ENCODE measurements at regions of chr14 and their contacts with region 1.

Region 1: GRCh38 chr14:64303471-64303917 is 9.3 kb upstream of the ESR2 start:
- DNase-seq: peak; percentile 82
- ATAC-seq: peak; percentile 96
- H3K4me3 ChIP-seq: no peak overlapping the region
- H3K27ac ChIP-seq: no peak overlapping the region
- H3K4me1 ChIP-seq: no peaks in the 10 kb centered on the region
- H3K27me3 ChIP-seq: no peaks in the 10 kb centered on the region
- CTCF ChIP-seq: peak; percentile 97

Region 2: DNA sequence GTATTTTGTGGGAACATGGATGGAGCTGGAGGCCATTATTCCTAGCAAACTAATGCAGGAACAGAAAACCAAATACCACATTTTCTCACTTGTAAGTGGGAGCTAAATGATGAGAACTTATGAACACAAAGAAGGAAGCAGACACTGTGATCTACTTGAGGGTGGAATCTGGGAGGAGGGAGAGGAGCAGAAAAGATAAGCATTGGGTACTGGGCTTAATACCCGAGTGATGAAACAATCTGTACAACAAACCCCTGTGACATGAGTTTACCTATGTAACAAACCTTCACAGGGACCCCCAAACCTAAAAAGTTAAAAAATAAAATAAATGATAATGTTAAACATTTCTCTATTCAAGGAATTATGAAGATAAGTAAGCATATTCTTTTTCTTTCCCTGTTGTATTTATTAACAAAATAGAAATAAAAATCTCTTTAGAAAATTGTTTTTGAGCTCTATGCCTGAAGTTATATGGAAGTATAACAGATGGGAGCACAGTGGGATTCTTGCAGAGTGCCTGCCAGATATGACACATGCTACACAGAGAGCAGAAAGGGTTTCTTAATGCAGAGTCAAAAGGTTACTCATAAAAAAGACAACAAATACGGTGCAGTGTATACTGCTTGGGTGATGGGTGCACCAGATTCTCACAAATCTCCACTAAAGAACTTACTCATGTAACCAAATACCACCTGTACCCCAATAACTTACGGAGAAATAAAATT is 502.7 kb before region 1 on chr14:
- CTCF ChIA-PET with region 1: interaction called, 7 read pairs
- POLR2A ChIA-PET with region 1: no interaction called
- intact Hi-C with region 1: loop called (anchors 1 kb)
- DNase-seq: peak; percentile 19
- ATAC-seq: peak; percentile 33; the same call in 1 of the 2 replicates
- H3K4me3 ChIP-seq: no peak overlapping the region
- H3K27ac ChIP-seq: no peak overlapping the region
- H3K4me1 ChIP-seq: no peaks in the 10 kb centered on the region
- H3K27me3 ChIP-seq: no peaks in the 10 kb centered on the region
- CTCF ChIP-seq: no peak

Region 3: GRCh38 chr14:63960926-63961567 is 342.4 kb before region 1 on chr14:
- CTCF ChIA-PET with region 1: interaction called, 24 read pairs
- POLR2A ChIA-PET with region 1: no interaction called
- intact Hi-C with region 1: no loop called
- DNase-seq: no peak
- ATAC-seq: peak; percentile 49
- H3K4me3 ChIP-seq: no peak overlapping the region
- H3K27ac ChIP-seq: no peak overlapping the region
- H3K4me1 ChIP-seq: no peaks in the 10 kb centered on the region
- H3K27me3 ChIP-seq: no peaks in the 10 kb centered on the region
- CTCF ChIP-seq: no peak

Region 4: DNA sequence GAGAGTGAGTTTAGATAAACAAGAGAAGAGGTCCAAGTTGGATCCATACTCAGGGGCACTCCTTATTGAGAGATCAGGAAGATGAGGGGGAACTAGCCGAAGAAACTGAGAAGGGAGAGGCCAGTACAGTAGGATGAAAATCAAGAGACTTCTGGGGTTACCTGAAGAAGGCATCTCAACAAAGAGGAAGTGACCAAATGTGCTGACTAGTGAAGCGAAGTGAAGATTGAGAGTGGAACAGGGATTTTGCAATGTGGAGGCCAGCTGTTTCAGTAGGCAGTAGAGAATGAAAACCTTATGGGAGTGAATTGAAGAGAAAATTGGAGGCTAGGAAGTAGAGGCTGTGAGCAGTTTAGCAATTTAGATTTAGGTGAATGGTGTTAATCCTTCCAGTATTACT is 297.7 kb before region 1 on chr14:
- CTCF ChIA-PET with region 1: interaction called, 22 read pairs
- POLR2A ChIA-PET with region 1: no interaction called
- intact Hi-C with region 1: loop called (anchors 1 kb)
- DNase-seq: no peak
- ATAC-seq: no peak
- H3K4me3 ChIP-seq: no peak overlapping the region
- H3K27ac ChIP-seq: no peak overlapping the region
- H3K4me1 ChIP-seq: no peaks in the 10 kb centered on the region
- H3K27me3 ChIP-seq: no peaks in the 10 kb centered on the region
- CTCF ChIP-seq: no peak

Region 5: DNA sequence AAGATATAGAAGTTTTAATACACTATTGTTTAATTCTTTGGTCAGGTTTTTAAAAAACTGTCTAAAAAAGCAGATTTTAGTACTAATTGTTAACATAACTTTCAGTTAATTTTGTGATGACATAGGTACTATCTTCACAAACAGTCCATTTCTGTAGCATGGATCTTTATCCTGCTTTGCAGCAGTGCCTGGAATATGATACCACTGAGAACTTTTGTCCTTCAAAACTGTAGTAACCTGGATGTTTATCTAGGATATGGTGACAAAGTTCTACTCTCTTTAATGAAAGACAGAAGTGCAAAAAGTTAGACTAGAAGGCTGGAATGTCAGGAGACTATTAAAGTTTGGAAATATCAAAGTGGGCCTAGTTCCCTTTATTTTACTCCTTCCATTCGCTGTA is 290.8 kb before region 1 on chr14:
- CTCF ChIA-PET with region 1: interaction called, 22 read pairs
- POLR2A ChIA-PET with region 1: no interaction called
- intact Hi-C with region 1: loop called (anchors 1 kb)
- DNase-seq: no peak
- ATAC-seq: no peak
- H3K4me3 ChIP-seq: no peak overlapping the region
- H3K27ac ChIP-seq: no peak overlapping the region
- H3K4me1 ChIP-seq: no peaks in the 10 kb centered on the region
- H3K27me3 ChIP-seq: no peaks in the 10 kb centered on the region
- CTCF ChIP-seq: no peak

Region 6: DNA sequence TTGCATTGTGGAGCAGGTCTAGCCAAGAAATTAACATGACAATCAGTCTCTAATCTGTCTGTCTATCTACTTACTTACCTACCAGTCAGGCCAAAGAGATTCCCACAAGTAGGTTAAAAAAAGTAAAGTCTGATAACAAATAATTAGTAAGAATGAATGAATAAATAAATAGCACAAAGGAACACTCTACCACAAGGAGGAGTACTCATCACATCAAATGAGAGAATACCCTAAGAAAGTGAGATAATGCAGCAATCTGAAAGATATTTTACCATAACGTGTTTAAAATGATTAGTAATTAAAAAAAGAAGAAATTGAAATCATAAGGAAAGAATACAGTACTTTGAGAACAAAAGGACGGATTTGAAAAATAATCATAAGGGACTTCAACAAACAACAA is 263.4 kb before region 1 on chr14:
- CTCF ChIA-PET with region 1: interaction called, 7 read pairs
- POLR2A ChIA-PET with region 1: no interaction called
- intact Hi-C with region 1: loop called (anchors 1 kb)
- DNase-seq: peak; percentile 37
- ATAC-seq: 0 out of 2 replicates have a peak, but pooled peaks have one; percentile 19
- H3K4me3 ChIP-seq: no peak overlapping the region
- H3K27ac ChIP-seq: no peak overlapping the region
- H3K4me1 ChIP-seq: no peaks in the 10 kb centered on the region
- H3K27me3 ChIP-seq: no peaks in the 10 kb centered on the region
- CTCF ChIP-seq: peak; percentile 76

Region 7: GRCh38 chr14:64137657-64138290 is 165.7 kb before region 1 on chr14:
- CTCF ChIA-PET with region 1: interaction called, 44 read pairs
- POLR2A ChIA-PET with region 1: no interaction called
- intact Hi-C with region 1: loop called (anchors 1 kb)
- DNase-seq: peak; percentile 64
- ATAC-seq: peak; percentile 92
- H3K4me3 ChIP-seq: no peak overlapping the region
- H3K27ac ChIP-seq: no peak overlapping the region
- H3K4me1 ChIP-seq: no peaks in the 10 kb centered on the region
- H3K27me3 ChIP-seq: no peaks in the 10 kb centered on the region
- CTCF ChIP-seq: peak; percentile 78

Region 8: DNA sequence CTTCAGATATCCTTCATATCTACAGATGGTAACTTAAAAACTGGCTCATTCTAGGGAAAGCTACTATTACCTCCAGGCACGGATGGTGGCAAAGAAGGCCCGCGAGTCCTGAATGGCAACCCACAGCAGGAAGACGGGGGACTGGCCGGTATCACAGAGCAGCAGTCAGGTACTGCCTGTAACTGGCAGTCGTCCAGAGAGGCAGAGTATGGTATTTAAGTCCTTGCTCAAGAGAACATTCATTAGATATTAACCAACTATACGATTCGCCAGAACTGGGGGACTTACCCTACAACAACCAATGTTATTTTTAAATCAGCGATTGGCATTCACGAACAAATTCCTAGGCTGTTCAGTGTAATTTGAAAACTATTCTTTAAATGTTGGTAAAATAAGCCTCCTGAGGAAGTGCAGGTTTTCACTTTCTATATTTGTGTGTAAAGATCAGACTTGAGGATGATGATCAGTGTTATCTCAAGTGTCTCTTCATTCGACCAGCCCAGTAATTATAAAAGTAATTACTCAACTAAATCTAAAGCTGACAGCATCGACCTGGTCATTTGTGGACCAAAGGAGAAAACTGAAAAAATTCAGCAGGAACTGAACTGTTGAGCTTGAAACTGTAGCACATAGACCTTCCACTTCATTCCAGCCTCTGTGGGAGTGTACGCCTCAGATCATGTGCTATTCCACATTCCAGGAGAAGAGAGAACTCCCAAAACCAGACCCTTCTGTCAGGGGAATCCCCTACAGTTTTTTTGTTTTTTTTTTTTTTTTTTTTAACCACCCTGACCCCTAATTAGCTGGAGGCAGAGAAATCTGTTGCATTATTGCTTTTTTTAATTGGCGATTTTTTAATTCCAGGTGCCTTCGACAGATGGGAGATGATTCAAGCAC is 84.9 kb before region 1 on chr14:
- CTCF ChIA-PET with region 1: no interaction called
- POLR2A ChIA-PET with region 1: no interaction called
- intact Hi-C with region 1: no loop called
- DNase-seq: no peak
- ATAC-seq: no peak
- H3K4me3 ChIP-seq: no peak overlapping the region
- H3K27ac ChIP-seq: no peak overlapping the region
- H3K4me1 ChIP-seq: no peaks in the 10 kb centered on the region
- H3K27me3 ChIP-seq: no peaks in the 10 kb centered on the region
- CTCF ChIP-seq: no peak

Region 9: DNA sequence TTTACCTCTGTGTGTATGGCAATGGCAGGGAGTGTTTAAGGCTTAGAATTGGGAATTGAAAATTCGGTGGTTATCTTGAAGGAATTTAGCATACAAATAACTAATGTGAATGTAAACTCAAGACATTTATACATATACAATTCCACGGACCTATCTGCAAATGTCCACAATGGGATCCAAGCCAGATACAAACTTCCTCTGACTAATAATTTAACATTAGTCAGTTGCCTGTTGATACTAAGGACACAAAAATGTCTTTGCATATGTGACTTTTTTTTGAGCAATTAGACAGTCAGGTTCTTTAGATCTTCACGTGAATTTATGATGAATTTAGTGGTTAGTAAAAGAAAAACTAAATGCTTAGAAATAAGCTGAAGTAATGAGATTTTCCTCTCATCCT is 49.8 kb before region 1 on chr14:
- CTCF ChIA-PET with region 1: no interaction called
- POLR2A ChIA-PET with region 1: no interaction called
- intact Hi-C with region 1: no loop called
- DNase-seq: peak; percentile 93
- ATAC-seq: peak; percentile 95
- H3K4me3 ChIP-seq: peak overlapping the region; percentile 41; the same call in 1 of the 2 replicates
- H3K27ac ChIP-seq: peak overlapping the region; percentile 40
- H3K4me1 ChIP-seq: peaks cover 17% of the 10 kb centered on the region
- H3K27me3 ChIP-seq: no peaks in the 10 kb centered on the region
- CTCF ChIP-seq: no peak

Region 10: DNA sequence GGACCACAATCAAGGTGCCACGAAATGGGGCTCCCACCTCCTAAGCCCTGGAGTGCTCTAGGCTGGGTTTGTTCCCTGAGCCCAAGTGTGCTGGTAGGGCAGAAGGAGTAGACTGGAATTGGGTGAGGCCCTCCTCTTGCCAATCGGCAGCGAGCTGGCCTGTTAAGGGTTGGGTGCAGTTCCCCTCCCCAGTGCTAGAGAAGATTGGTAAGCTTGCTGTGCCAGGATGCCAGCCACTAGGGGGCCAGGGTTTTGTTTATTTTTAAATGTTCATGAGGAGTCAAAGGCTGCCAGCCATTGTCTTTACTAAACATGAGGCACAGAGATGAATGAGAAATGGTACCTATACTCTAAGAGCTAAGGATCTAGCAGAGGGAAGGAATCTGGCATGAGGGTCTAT is 496.5 kb after region 1 on chr14:
- CTCF ChIA-PET with region 1: no interaction called
- POLR2A ChIA-PET with region 1: no interaction called
- intact Hi-C with region 1: no loop called
- DNase-seq: peak; percentile 69
- ATAC-seq: peak; percentile 55
- H3K4me3 ChIP-seq: no peak overlapping the region
- H3K27ac ChIP-seq: no peak overlapping the region
- H3K4me1 ChIP-seq: peaks cover 10% of the 10 kb centered on the region
- H3K27me3 ChIP-seq: no peaks in the 10 kb centered on the region
- CTCF ChIP-seq: peak; percentile 91

Measured in PC-3 (cell line).